ENCODE measurements at regions of chr14 and their contacts with region 1.

Region 1: DNA sequence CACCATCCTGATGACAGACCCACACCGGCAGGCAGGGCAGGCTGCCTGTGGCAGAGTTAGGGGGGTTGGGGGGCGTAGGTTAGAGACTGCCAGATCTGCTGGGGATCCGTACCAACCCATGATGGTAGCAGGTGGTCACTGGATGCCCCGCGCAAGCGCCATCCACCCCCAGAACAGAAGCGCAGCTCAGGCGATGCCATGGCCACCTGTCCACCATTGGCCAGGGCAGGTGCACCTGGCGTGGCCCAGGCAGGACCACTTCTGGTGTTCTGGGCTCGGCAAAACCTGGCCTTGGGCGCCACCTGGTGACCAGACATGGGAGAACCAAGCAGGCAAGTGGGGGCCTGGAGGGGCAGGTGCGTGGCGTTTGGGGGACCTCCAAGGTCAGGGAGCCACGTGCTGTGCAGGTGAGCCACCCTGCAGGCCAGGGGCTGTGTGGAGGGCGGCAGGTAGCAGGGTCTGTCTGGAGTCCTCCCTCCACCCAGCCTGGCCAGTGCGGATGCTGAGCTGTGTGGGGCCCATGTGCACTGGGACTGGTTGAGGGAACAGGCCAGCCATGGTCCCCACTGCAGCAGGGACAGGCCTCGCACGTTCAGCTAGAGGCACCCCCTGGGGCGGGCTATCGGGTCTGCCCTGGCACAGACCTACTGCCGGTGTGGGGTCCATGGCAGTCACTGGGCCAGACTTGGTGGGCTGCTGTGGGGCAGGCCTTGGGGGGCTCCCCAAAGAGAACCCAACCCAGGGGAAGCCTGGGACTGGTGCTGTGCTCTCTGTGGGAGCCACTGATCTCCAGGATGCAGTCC is 15.6 kb downstream of the BAG5 start:
- DNase-seq: peak; percentile 69 to 81
- ATAC-seq: peak in 7 of 8 donors; percentile 11 to 42 (median 20)
- H3K4me3 ChIP-seq: no peak overlapping the region
- H3K27ac ChIP-seq: no peak overlapping the region
- H3K4me1 ChIP-seq: peaks cover 39 to 83% (median 65%) of the 10 kb centered on the region in 9 donors
- H3K27me3 ChIP-seq: no peaks in the 10 kb centered on the region
- CTCF ChIP-seq: peak; percentile 78 to 95 (median 91)

Region 2: GRCh38 chr14:103339561-103339960 is 207.3 kb before region 1 on chr14:
- intact Hi-C with region 1: loop called in 1 of 10 experiments (anchors 1 kb)
- DNase-seq: no peak
- ATAC-seq: no peak
- H3K4me3 ChIP-seq: no peak overlapping the region
- H3K27ac ChIP-seq: no peak overlapping the region
- H3K4me1 ChIP-seq: peaks cover 7 to 49% (median 29%) of the 10 kb centered on the region in 9 donors
- H3K27me3 ChIP-seq: no peaks in the 10 kb centered on the region
- CTCF ChIP-seq: no peak

Region 3: DNA sequence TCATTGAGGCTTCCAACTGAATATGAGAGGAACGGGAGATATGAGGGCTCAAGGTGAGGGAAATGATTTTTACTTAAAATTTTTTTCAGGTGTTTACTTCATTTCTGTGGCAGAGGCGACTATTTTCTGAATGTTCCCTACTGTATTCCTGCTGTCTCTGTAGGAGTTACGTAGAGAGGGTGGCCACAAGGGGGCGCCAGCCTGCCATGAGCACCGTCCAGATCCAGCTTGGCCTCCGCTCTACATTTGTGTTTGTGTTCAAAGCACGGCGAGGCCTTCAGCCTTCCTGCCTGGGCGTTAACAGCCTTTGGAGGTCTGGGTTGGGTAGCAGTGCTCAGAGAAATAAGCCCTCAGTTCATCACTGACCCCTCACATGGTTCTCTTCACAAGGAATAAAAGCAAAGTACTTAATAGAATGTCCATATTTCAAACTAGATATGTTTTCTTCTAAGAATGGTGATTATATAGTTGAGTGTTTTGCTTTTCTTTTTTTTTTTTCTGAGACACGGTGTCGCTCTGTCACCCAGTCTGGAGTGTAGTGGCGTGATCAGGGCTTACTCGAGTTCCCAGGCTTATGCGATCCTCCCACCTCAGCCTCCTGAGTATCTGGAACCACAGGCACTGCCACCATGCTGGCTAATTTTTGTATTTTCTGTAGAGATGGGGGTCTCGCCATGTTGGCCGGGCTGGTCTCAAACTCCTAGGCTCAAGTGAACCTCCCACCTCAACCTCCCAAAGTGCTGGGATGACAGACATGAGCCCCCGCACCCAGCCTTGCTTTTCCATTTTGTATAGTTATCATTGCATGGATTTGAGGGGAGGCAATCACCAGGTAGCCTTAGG is 46.5 kb before region 1 on chr14:
- intact Hi-C with region 1: loop called in 9 of 10 experiments (anchors 1 to 5 kb)
- DNase-seq: peak; percentile 87 to 90
- ATAC-seq: peak; percentile 74 to 95 (median 90)
- H3K4me3 ChIP-seq: no peak overlapping the region
- H3K27ac ChIP-seq: peak overlapping the region in 5 of 10 donors; percentile 5 to 61 (median 41)
- H3K4me1 ChIP-seq: peaks cover 8 to 32% (median 14%) of the 10 kb centered on the region in 9 donors
- H3K27me3 ChIP-seq: no peaks in the 10 kb centered on the region
- CTCF ChIP-seq: peak; percentile 88 to 99 (median 94)

Region 4: GRCh38 chr14:103518422-103519042 is 28.3 kb before region 1 on chr14:
- intact Hi-C with region 1: loop called in 9 of 10 experiments (anchors 1 to 2 kb)
- DNase-seq: peak; percentile 68 to 78
- ATAC-seq: peak; percentile 20 to 75 (median 56)
- H3K4me3 ChIP-seq: no peak overlapping the region
- H3K27ac ChIP-seq: peak overlapping the region in 8 of 10 donors; percentile 17 to 82 (median 54)
- H3K4me1 ChIP-seq: peaks cover 39 to 87% (median 56%) of the 10 kb centered on the region in 9 donors
- H3K27me3 ChIP-seq: peaks cover 0 to 32% (median 0%) of the 10 kb centered on the region in 7 donors
- CTCF ChIP-seq: peak; percentile 88 to 96 (median 93)

Measured in heart right ventricle (tissue), 16 donors.